Activated CD4-positive, alpha-beta T cell treated with anti-CD3 and anti-CD28 coated beads, Interleukin-2, amount 10 ng/mL, durations not matched to agents 24 days and 14 days (primary cell): ENCODE measurements at regions of chr22 and their contacts with region 1.

Region 1: GRCh38 chr22:25067851-25068421 is 115.4 kb downstream of the KIAA1671 start:
- DNase-seq: peak; percentile 96
- H3K4me3 Mint-ChIP-seq: peak overlapping the region; percentile 95
- H3K27ac Mint-ChIP-seq: peak overlapping the region; percentile 97
- H3K4me1 Mint-ChIP-seq: peaks cover 73% of the 10 kb centered on the region
- H3K27me3 Mint-ChIP-seq: no peaks in the 10 kb centered on the region

Region 2: DNA sequence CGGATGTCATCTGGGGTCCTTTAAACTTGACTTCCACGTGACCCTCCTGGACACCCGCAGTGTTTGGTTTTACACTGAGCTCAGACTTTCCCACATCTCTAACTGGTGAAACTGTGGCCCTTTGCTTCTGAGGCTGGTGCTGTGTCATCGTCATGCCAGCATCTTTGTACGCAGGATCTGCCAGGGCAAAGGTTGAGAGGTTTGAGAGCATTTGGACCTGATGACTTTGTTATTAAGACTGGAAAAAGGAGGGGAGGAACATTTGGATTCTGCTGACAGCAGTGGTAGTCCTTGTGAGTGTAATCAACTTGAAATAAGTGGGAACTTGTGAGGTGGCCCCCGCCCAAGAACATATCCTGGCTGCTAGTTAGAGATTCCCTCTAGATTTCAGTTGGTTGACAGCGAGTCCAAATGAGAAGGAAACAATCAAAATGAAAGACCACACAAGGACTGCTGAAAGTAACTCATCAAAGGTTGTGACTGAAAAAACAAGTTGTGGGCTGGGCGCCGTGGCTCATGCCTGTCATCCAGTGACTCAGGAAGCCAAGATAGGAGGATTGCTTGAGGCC is 12.9 kb before region 1 on chr22:
- intact Hi-C with region 1: loop called (anchors 2 kb)
- DNase-seq: peak; percentile 76
- H3K4me3 Mint-ChIP-seq: peak overlapping the region; percentile 38
- H3K27ac Mint-ChIP-seq: peak overlapping the region; percentile 85
- H3K4me1 Mint-ChIP-seq: peaks cover 27% of the 10 kb centered on the region
- H3K27me3 Mint-ChIP-seq: peaks cover 2% of the 10 kb centered on the region

Region 3: GRCh38 chr22:25404928-25405816 is 337.2 kb after region 1 on chr22:
- intact Hi-C with region 1: loop called (anchors 10 kb)
- DNase-seq: peak; percentile 94
- H3K4me3 Mint-ChIP-seq: peak overlapping the region; percentile 90
- H3K27ac Mint-ChIP-seq: peak overlapping the region; percentile 79
- H3K4me1 Mint-ChIP-seq: peaks cover 25% of the 10 kb centered on the region
- H3K27me3 Mint-ChIP-seq: no peaks in the 10 kb centered on the region